Endothelial cell of umbilical vein (primary cell): ENCODE measurements at regions of chr1 and their contacts with region 1.

Region 1: DNA sequence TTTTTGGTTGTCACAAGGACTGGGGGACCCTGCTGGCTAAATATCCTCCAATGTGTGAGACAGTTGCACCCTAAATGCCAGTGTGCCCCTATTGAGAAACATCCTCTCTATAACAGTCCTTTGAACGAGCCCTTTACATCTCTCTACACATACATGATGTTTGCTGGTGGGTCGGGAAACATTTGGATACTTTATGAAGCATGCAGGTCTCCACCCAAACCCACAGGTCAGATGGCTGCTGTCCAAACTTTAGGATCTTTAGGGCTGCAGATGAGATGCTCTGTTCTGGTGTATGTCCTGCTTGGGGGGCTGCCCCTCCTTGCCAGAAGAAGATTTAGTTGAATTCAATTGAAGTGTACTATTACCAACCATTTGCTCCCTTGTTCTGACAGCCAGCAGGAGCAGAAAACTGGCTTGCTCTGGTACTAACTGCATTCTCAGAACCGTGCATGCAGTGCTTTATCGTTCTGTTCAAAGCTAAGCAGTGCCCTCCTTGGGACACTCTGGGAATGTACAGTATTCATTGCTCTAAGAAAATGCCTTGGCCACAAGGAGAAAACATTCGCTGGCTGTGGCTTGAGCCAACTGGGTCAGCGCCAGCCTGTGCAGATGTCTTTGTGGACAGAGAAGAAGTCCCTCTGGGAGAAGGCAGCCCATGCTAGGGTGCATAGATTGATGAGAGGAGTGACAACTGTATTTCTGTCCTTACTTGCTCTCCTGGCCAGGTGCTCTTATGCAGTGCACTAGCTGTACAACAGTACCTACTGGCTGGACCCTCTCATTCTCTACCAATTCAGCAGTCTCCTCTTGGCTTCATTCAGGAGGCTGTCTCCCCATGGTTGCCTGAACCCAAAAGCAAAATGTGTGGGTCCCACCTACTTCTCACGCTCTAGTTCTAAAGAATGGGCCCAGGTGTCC is 61.4 kb upstream of the DIRAS3 start:
- DNase-seq: peak; percentile 88
- H3K4me3 ChIP-seq: no peak overlapping the region
- H3K27ac ChIP-seq: no peak overlapping the region
- H3K4me1 ChIP-seq: peaks cover 8% of the 10 kb centered on the region
- H3K27me3 ChIP-seq: no peaks in the 10 kb centered on the region
- CTCF ChIP-seq: peak; percentile 68
- POLR2A ChIP-seq: no peak

Region 2: DNA sequence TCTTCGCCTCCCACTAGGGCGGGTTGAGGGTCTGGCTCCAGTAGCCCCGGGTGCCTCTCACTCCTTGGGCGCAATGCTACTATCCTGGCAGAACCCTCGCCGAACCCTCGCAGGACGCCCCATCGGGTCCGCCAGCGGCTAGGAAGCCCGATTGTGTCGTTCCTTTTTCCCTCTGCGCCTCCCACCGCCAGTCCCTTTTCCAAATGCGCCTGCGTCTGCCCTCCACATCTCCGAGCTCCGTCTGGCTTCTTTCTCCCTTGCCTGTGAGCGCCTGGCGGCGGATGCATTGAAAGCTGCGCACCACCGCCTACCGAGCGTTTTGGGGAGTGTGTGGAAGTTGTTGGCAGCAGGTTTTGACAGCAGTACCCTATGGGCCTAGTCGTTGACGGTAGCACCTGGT is 60.3 kb before region 1 on chr1:
- CTCF ChIA-PET with region 1: interaction called, 5 read pairs
- POLR2A ChIA-PET with region 1: no interaction called
- dilution Hi-C with region 1: no loop called
- intact Hi-C with region 1: loop called (anchors 5 kb)
- DNase-seq: peak; percentile 77
- H3K4me3 ChIP-seq: peak overlapping the region in 2 of 3 experiments; percentile 42 to 49
- H3K27ac ChIP-seq: no peak overlapping the region
- H3K4me1 ChIP-seq: no peaks in the 10 kb centered on the region
- H3K27me3 ChIP-seq: no peaks in the 10 kb centered on the region
- CTCF ChIP-seq: peak; percentile 39 to 59
- POLR2A ChIP-seq: peak; percentile 20

Region 3: GRCh38 chr1:68087184-68087583 is 24.6 kb before region 1 on chr1:
- CTCF ChIA-PET with region 1: no interaction called
- POLR2A ChIA-PET with region 1: no interaction called
- dilution Hi-C with region 1: no loop called
- intact Hi-C with region 1: no loop called
- DNase-seq: peak; percentile 28
- H3K4me3 ChIP-seq: no peak overlapping the region
- H3K27ac ChIP-seq: no peak overlapping the region
- H3K4me1 ChIP-seq: no peaks in the 10 kb centered on the region
- H3K27me3 ChIP-seq: no peaks in the 10 kb centered on the region
- CTCF ChIP-seq: no peak
- POLR2A ChIP-seq: no peak

Region 4: DNA sequence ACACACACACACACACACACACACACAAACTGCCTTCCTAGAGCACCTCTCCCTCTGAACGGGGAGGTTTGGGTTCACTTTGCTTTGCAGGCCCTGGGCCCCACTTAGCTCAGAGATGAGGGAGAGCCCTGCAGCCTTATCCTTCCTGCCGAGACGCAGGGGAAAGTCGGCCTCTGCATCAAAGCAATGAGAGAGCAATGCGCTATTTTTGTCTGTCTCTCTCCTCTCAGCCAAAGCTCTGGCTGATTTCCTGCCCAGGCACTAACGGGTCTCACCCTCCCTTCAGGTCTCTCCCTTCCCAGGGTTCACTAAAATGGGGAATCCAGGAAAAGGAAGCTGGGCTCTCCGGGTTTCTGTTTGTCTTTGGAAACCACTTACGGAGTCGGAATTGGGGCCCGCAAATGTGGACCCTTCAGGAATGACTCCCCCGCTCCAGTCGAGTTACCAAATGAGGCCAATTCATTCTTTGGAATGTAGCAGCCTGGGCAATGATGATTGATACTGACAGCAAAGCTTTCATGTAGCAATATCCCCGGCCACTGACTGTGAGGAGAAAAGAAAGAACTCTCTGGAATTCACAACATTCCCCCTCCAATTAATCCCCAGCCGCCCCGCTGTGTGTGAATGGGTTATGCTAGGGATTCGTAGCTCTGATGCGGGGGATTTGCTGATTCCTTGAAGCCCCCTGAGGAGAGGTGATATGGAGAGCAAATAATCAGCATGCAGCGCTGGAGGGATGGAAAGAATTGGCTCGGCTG is 182.0 kb after region 1 on chr1:
- CTCF ChIA-PET with region 1: no interaction called
- POLR2A ChIA-PET with region 1: no interaction called
- dilution Hi-C with region 1: no loop called
- intact Hi-C with region 1: no loop called
- DNase-seq: peak; percentile 41
- H3K4me3 ChIP-seq: no peak overlapping the region
- H3K27ac ChIP-seq: no peak overlapping the region
- H3K4me1 ChIP-seq: peaks cover 7% of the 10 kb centered on the region
- H3K27me3 ChIP-seq: no peaks in the 10 kb centered on the region
- CTCF ChIP-seq: no peak
- POLR2A ChIP-seq: no peak